Activated B cell treated with CpG ODN at 0.5 μM for 24 hours (primary cell): ENCODE measurements at regions of chr3 and their contacts with region 1.

Region 1: GRCh38 chr3:150603153-150603979 is at the start of gene SELENOT:
- DNase-seq: peak; percentile 94
- ATAC-seq: peak; percentile 62
- H3K4me3 Mint-ChIP-seq: peak within 1 kb of the TSS; percentile 100
- H3K27ac Mint-ChIP-seq: peak within 1 kb of the TSS; percentile 100
- H3K4me1 Mint-ChIP-seq: peaks cover 87% of the 10 kb centered on the region
- H3K27me3 Mint-ChIP-seq: no peaks in the 10 kb centered on the region
- CTCF ChIP-seq: no peak
- total RNA-seq, gene SELENOT: 137 and 145 TPM in 2 replicates

Region 2: DNA sequence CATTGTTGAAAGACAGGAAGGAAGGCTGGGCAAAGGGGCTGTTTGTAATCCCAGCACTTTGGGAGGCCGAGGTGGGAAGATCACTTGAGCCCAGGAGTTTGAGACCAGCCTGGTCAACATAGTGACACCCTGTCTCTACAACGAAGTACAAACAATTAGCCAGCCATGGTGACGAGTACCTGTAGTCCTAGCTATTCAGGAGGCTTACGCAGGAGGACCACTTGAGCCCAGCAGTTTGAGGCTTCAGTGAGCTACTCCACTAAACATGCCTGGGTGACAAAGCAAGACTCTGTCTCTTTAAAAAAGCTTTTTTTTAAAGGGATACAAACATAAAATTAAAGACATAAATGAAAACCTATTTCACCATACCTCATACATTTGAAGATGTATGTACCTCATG is 68.2 kb before region 1 on chr3:
- CTCF ChIA-PET with region 1: no interaction called
- POLR2A ChIA-PET with region 1: no interaction called
- intact Hi-C with region 1: no loop called
- DNase-seq: no peak
- ATAC-seq: no peak
- H3K4me3 Mint-ChIP-seq: no peak overlapping the region
- H3K27ac Mint-ChIP-seq: no peak overlapping the region
- H3K4me1 Mint-ChIP-seq: no peaks in the 10 kb centered on the region
- H3K27me3 Mint-ChIP-seq: no peaks in the 10 kb centered on the region
- CTCF ChIP-seq: no peak

Region 3: DNA sequence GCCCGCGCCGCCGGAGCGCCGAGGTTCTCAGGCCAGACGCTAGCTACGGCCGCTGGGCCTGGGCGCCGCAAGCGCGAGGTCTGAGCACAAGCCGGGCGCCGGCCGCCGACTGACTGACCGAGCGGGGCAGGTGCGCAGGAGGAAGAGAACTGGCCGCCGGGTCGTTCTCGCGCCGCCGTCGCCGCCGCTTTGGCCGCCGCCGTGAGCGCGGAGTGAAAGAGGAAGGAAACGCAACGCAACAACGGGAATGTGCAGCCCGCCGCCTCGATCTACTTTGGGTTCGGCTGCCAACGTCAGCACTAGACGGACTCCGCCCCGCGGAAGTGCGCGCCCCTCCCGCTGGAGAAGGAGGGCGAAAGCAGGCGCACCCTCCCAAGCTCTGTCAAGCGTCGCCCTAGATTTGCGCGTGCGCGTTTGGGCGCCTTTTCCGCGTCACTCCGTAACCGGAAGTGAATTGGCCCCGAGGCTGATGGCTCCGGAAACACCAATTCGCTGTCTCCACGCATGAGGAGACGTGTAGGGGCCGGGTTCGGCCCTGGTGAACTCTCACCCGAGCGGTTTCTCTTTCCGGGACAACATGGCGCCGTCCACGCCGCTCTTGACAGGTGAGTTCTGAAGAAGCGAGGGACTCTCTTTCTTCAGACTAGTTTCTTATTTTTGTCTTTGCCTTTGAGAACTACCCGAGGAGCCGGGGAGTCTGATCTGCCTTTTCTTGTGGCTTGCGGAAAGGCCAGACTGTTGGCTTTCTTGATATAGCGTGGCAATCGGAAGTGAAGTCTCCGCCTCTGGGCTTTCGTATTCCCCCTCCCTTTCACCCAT is 56.9 kb before region 1 on chr3 and contains the starts of genes EIF2A and SERP1:
- CTCF ChIA-PET with region 1: no interaction called
- POLR2A ChIA-PET with region 1: interaction called, 37 read pairs
- intact Hi-C with region 1: loop called (anchors 1 kb)
- DNase-seq: peak; percentile 98
- ATAC-seq: peak; percentile 92
- H3K4me3 Mint-ChIP-seq: peak within 1 kb of the TSS; percentile 96
- H3K27ac Mint-ChIP-seq: peak within 1 kb of the TSS; percentile 99
- H3K4me1 Mint-ChIP-seq: peaks cover 50% of the 10 kb centered on the region
- H3K27me3 Mint-ChIP-seq: no peaks in the 10 kb centered on the region
- CTCF ChIP-seq: no peak
- total RNA-seq, gene EIF2A: 105 and 109 TPM in 2 replicates
- total RNA-seq, gene SERP1: 87.2 and 88.2 TPM in 2 replicates

Region 4: GRCh38 chr3:150588027-150588830 is 15.1 kb before region 1 on chr3:
- CTCF ChIA-PET with region 1: no interaction called
- POLR2A ChIA-PET with region 1: interaction called, 10 read pairs
- intact Hi-C with region 1: loop called (anchors 1 kb)
- DNase-seq: no peak
- ATAC-seq: no peak
- H3K4me3 Mint-ChIP-seq: no peak overlapping the region
- H3K27ac Mint-ChIP-seq: peak overlapping the region; percentile 11
- H3K4me1 Mint-ChIP-seq: no peaks in the 10 kb centered on the region
- H3K27me3 Mint-ChIP-seq: no peaks in the 10 kb centered on the region
- CTCF ChIP-seq: no peak

Region 5: GRCh38 chr3:150635526-150635925 is 32.2 kb after region 1 on chr3:
- CTCF ChIA-PET with region 1: no interaction called
- POLR2A ChIA-PET with region 1: interaction called, 10 read pairs
- intact Hi-C with region 1: no loop called
- DNase-seq: no peak
- ATAC-seq: peak; percentile 56
- H3K4me3 Mint-ChIP-seq: no peak overlapping the region
- H3K27ac Mint-ChIP-seq: no peak overlapping the region
- H3K4me1 Mint-ChIP-seq: peaks cover 18% of the 10 kb centered on the region
- H3K27me3 Mint-ChIP-seq: no peaks in the 10 kb centered on the region
- CTCF ChIP-seq: no peak

Region 6: DNA sequence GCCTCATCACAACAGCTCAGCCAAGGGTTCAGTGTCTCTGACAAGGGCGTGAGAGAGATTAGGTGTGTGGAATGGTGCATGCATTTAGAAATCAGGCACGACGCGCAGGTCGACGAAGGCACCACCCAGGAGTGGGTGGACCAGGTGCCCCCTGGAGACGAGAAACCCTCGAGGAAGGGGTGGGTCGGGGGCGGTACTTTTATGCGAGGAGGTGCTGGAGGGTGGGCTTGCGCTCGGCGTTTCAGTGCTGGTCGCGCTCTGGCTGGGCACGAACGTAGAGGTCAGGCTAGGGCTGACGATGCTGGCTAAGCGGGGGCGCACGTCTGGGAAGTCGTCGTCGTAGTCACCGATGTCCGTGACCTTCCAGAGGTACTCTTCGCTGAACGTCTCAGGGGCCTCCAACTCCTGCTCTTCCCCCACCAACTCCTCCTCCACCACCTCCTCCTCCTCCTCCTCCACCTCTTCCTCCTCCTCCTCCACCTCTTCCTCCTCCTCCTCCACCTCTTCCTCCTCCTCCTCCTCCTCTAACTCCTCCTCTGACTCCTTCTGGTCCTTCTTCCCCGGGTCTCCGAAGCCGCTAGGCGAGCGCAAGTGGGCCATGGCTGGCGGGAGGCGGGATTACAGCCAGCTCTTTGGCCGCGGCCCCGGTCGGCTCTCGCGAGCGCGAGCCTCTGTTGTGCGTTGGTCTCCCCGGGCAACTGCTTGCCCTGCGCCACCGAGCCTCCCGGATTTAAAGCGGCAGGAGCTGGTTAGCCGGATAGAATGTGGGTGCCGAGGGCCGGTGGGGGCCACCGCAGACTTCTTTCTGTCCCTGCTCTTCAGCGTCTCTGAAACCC is 100.2 kb after region 1 on chr3 and contains the start of gene ERICH6:
- CTCF ChIA-PET with region 1: no interaction called
- POLR2A ChIA-PET with region 1: interaction called, 25 read pairs
- intact Hi-C with region 1: loop called (anchors 1 kb)
- DNase-seq: peak; percentile 86
- ATAC-seq: peak; percentile 93
- H3K4me3 Mint-ChIP-seq: peak within 1 kb of the TSS; percentile 97
- H3K27ac Mint-ChIP-seq: peak within 1 kb of the TSS; percentile 98
- H3K4me1 Mint-ChIP-seq: peaks cover 19% of the 10 kb centered on the region
- H3K27me3 Mint-ChIP-seq: no peaks in the 10 kb centered on the region
- CTCF ChIP-seq: no peak
- total RNA-seq, gene ERICH6: not detected in 2 replicates

Region 7: GRCh38 chr3:150751753-150752263 is 148.4 kb after region 1 on chr3:
- CTCF ChIA-PET with region 1: no interaction called
- POLR2A ChIA-PET with region 1: no interaction called
- intact Hi-C with region 1: no loop called
- DNase-seq: no peak
- ATAC-seq: no peak
- H3K4me3 Mint-ChIP-seq: no peak overlapping the region
- H3K27ac Mint-ChIP-seq: peak overlapping the region; percentile 18
- H3K4me1 Mint-ChIP-seq: peaks cover 84% of the 10 kb centered on the region
- H3K27me3 Mint-ChIP-seq: no peaks in the 10 kb centered on the region
- CTCF ChIP-seq: no peak

Region 8: DNA sequence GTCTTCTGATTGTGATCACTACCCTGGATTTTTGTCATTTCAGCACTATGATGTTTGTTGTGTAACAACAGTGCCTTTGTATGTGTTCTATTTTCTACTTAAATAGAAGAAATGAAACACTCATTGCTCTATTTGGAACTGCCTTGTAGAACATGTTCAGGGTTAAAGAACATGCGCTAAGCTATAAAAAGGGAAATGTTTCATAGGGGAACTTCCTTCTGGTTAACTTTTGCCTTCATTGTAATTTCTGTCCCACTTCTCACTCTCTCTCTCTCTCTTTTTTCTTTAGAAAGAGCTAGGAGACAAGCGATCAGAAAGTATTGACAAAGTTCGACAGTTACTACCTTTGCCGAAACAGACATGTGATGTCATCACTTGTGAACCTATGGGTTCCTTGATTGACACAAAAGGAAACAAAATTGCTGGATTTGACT is 781.4 kb after region 1 on chr3 and contains the start of gene P2RY12:
- CTCF ChIA-PET with region 1: no interaction called
- POLR2A ChIA-PET with region 1: interaction called, 7 read pairs
- intact Hi-C with region 1: loop called (anchors 2 kb)
- DNase-seq: no peak
- ATAC-seq: peak; percentile 29
- H3K4me3 Mint-ChIP-seq: peak within 1 kb of the TSS; percentile 79
- H3K27ac Mint-ChIP-seq: peak within 1 kb of the TSS; percentile 97
- H3K4me1 Mint-ChIP-seq: peaks cover 76% of the 10 kb centered on the region
- H3K27me3 Mint-ChIP-seq: no peaks in the 10 kb centered on the region
- CTCF ChIP-seq: no peak
- total RNA-seq, gene P2RY12: 0.58 and 0.64 TPM in 2 replicates

Region 9: DNA sequence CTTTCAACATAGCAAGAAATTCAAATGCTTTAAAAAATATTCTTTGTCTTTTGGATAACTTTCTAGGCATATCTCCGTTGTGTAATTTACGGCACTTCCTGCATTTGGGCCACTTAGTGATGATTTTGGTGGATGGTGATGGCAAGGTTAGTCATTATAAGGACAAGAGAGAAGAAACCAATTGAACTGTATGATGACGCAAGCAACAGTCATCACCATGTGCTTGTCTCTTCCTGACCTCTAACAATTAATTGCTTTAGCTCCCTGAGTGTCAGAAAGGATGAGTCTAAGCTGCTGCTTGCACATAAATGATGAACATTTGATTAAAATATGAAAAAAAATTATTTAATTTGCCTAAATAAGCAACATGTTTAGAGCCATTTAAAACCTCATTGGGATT is 792.4 kb after region 1 on chr3:
- CTCF ChIA-PET with region 1: no interaction called
- POLR2A ChIA-PET with region 1: no interaction called
- intact Hi-C with region 1: no loop called
- DNase-seq: no peak
- ATAC-seq: no peak
- H3K4me3 Mint-ChIP-seq: no peak overlapping the region
- H3K27ac Mint-ChIP-seq: no peak overlapping the region
- H3K4me1 Mint-ChIP-seq: peaks cover 50% of the 10 kb centered on the region
- H3K27me3 Mint-ChIP-seq: no peaks in the 10 kb centered on the region
- CTCF ChIP-seq: no peak